Caco-2 (cell line): ENCODE measurements at regions of chr2 and their contacts with region 1.

Region 1: GRCh38 chr2:241355983-241356870 is at the start of gene FARP2:
- DNase-seq: peak; percentile 96 to 98
- H3K4me3 ChIP-seq: peak within 1 kb of the TSS; percentile 78
- H3K4me3 Mint-ChIP-seq: peak within 1 kb of the TSS; percentile 72
- H3K27ac Mint-ChIP-seq: peak within 1 kb of the TSS; percentile 76
- H3K4me1 ChIP-seq: peaks cover 25% of the 10 kb centered on the region
- H3K4me1 Mint-ChIP-seq: peaks cover 17% of the 10 kb centered on the region
- H3K27me3 ChIP-seq: no peaks in the 10 kb centered on the region
- H3K27me3 Mint-ChIP-seq: no peaks in the 10 kb centered on the region
- CTCF ChIP-seq: no peak
- total RNA-seq, gene FARP2: 37.2 and 37.3 TPM in 2 replicates

Region 2: GRCh38 chr2:241300000-241300399 is 56.2 kb before region 1 on chr2:
- CTCF ChIA-PET with region 1: no interaction called
- POLR2A ChIA-PET with region 1: no interaction called
- intact Hi-C with region 1: no loop called
- DNase-seq: no peak
- H3K4me3 ChIP-seq: no peak overlapping the region
- H3K4me3 Mint-ChIP-seq: no peak overlapping the region
- H3K27ac Mint-ChIP-seq: no peak overlapping the region
- H3K4me1 ChIP-seq: no peaks in the 10 kb centered on the region
- H3K4me1 Mint-ChIP-seq: peaks cover 20% of the 10 kb centered on the region
- H3K27me3 ChIP-seq: no peaks in the 10 kb centered on the region
- H3K27me3 Mint-ChIP-seq: no peaks in the 10 kb centered on the region
- CTCF ChIP-seq: no peak

Region 3: DNA sequence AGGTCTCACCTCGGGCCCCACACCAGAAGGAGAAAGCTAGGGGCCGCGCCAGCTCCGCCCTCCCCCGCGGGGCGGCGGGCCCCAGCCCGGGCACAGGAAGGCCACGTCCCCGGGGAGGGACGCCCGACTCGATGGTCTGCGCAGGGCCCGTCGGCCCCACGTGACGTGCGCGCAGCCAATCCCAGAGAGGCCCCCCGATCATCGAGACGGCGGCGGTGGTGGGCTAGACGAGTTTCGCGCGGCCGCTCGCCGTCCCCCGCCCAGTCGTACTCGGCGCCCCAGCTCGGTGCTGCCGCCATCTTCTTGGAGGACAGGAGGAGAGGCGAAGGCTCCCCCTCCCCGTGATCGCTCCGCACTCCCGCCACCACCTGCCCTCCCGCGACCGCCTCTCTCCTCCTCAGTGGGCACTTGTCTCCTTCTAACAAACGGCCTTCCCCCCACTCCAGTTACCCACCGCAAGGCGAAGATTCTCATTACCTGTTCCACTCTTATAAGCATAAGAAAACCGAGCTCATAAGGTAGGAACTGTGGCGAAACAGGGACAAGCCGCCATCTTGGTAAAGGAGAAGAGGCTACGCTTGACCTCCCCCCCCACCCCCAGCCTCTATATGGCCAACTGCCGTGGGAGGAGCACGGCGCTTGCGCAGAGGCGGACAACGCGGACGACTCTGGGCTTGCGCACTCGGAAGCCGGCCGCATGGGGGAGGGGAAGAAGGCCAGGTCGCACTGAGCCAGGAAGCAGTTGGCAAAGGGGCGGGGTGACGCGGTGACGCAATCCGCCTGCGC is 40.9 kb before region 1 on chr2 and contains the start of gene HDLBP:
- CTCF ChIA-PET with region 1: no interaction called
- POLR2A ChIA-PET with region 1: interaction called, 7 read pairs
- intact Hi-C with region 1: loop called (anchors 1 kb)
- DNase-seq: peak; percentile 97 to 98
- H3K4me3 ChIP-seq: peak within 1 kb of the TSS; percentile 92
- H3K4me3 Mint-ChIP-seq: peak within 1 kb of the TSS; percentile 100
- H3K27ac Mint-ChIP-seq: peak within 1 kb of the TSS; percentile 100
- H3K4me1 ChIP-seq: peaks cover 18% of the 10 kb centered on the region; the same call in 1 of the 2 replicates
- H3K4me1 Mint-ChIP-seq: peaks cover 17% of the 10 kb centered on the region
- H3K27me3 ChIP-seq: no peaks in the 10 kb centered on the region
- H3K27me3 Mint-ChIP-seq: no peaks in the 10 kb centered on the region
- CTCF ChIP-seq: no peak
- total RNA-seq, gene HDLBP: 350 and 379 TPM in 2 replicates

Region 4: DNA sequence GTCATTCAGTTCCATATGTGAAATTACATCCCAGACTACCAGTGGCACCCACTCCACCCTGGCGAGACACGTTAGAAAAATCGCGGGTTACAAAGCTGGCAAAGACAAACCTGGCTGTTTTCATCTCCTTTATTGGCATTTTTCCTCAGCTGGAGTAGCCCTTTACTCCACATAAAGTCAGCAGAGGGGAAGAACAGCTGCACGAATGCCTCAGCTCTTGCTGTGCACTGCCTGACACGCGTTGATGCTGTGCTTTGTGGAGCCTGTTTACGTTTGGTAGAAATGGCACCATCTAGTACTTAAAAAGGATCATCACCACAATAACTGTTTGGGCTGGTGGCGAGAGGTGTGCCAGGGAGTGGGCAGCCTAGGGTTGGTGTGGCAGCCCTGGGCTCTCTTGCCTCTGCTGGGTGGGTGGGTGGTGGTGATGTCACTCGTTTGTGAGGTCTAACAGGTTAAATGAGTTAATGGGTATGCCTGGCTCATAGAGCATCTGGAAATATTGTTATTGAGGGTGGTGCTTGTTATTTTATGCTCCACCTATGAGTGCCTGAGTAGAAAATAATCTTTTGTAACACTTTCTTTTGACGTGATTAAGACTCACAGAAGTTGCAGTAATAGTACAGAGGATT is 16.2 kb after region 1 on chr2:
- CTCF ChIA-PET with region 1: interaction called, 3 read pairs
- POLR2A ChIA-PET with region 1: interaction called, 13 read pairs
- intact Hi-C with region 1: loop called (anchors 1 kb)
- DNase-seq: no peak
- H3K4me3 ChIP-seq: no peak overlapping the region
- H3K4me3 Mint-ChIP-seq: no peak overlapping the region
- H3K27ac Mint-ChIP-seq: peak overlapping the region; percentile 26
- H3K4me1 ChIP-seq: peaks cover 37% of the 10 kb centered on the region
- H3K4me1 Mint-ChIP-seq: peaks cover 19% of the 10 kb centered on the region
- H3K27me3 ChIP-seq: no peaks in the 10 kb centered on the region
- H3K27me3 Mint-ChIP-seq: no peaks in the 10 kb centered on the region
- CTCF ChIP-seq: no peak

Region 5: DNA sequence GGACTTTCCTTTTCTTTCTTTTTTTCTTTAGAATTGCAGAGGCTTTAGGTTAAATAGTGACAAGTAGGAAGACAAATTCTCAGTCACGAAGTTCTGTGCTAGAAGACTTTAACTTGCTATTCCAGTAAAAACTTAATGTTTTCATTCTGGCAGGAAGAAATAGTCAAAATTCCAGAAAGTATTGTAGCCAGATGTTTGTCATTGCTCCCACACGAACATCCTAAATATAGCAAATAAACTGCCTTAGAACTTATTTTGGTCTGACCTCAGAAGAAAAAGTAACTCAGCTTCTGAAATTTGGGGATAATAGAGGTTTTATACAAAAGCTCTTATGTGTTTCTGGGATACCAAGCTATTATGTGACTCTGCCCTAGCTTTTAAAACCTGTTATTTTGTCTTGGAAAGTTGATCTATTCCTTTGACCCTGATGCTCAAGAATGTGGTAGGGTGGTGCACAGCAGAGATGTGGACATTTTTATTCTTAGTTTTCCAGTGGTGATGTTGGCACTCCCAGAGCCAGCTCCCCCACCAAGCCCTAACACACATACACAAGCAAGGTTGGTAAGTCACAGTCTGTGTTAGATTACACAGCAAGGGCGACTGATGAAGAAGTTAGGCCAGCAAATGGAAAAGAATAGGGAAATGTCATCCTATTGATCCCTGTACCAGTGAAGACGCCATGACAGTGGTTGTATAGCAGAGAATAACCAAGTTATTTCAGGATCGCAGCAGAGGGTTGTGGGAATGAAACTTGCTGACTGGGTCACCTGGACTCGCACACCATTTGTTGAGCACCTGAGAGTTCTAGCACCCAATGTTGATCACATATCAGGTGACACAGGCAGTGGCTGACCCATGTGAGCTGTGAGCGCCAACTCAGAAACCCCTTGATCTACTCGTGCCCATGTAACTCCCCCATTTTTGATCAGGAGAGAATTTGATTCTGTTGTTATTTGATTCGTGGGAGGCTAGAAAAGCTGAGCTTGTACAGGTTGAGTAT is 23.6 kb after region 1 on chr2:
- CTCF ChIA-PET with region 1: interaction called, 3 read pairs
- POLR2A ChIA-PET with region 1: no interaction called
- intact Hi-C with region 1: loop called (anchors 1 kb)
- DNase-seq: no peak
- H3K4me3 ChIP-seq: no peak overlapping the region
- H3K4me3 Mint-ChIP-seq: no peak overlapping the region
- H3K27ac Mint-ChIP-seq: no peak overlapping the region
- H3K4me1 ChIP-seq: peaks cover 19% of the 10 kb centered on the region; the same call in 1 of the 2 replicates
- H3K4me1 Mint-ChIP-seq: peaks cover 7% of the 10 kb centered on the region
- H3K27me3 ChIP-seq: no peaks in the 10 kb centered on the region
- H3K27me3 Mint-ChIP-seq: no peaks in the 10 kb centered on the region
- CTCF ChIP-seq: no peak

Region 6: DNA sequence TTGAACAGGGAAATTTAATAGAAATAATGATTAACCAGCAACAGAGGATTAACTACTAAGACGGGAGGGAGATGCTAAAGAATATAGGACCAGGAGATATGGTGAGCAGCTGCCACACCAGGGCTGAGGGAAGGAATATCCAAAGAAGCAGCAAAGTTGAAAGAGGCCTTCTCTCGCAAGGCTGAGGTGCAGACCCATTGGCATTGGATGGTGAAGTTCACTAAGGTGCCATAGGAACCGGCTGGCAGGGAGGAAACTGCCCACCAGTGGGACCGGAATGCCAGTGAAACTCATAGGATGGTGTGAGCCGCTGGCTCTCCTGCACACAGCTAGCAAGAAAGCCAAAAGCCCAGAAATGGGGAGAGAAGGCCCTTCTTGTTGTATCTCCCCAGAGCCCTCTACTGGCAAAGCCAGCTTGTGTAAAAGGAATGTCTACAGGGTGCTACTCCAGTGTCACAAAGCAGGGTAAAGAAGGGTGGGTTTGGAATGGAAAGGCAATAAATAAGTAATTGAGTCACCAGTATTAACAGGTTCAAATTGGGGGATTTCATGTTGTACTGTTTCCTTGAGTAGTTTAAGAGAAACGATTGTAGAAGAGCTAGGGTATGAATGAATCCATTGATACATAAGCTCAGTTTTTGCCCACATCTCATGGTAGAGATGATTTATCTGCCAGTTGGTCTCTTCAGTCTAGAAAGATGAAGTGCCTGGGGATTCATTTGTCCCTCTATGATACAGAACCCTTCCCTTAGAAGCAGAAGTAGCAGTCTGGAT is 35.9 kb after region 1 on chr2:
- CTCF ChIA-PET with region 1: interaction called, 14 read pairs
- POLR2A ChIA-PET with region 1: no interaction called
- intact Hi-C with region 1: loop called (anchors 1 kb)
- DNase-seq: peak; percentile 52 to 59
- H3K4me3 ChIP-seq: no peak overlapping the region
- H3K4me3 Mint-ChIP-seq: no peak overlapping the region
- H3K27ac Mint-ChIP-seq: peak overlapping the region; percentile 37
- H3K4me1 ChIP-seq: no peaks in the 10 kb centered on the region
- H3K4me1 Mint-ChIP-seq: peaks cover 11% of the 10 kb centered on the region
- H3K27me3 ChIP-seq: no peaks in the 10 kb centered on the region
- H3K27me3 Mint-ChIP-seq: no peaks in the 10 kb centered on the region
- CTCF ChIP-seq: peak; percentile 45 to 80

Region 7: GRCh38 chr2:241432824-241433448 is 76.7 kb after region 1 on chr2:
- CTCF ChIA-PET with region 1: no interaction called
- POLR2A ChIA-PET with region 1: no interaction called
- intact Hi-C with region 1: no loop called
- DNase-seq: peak in 1 of 2 experiments; percentile 4
- H3K4me3 ChIP-seq: no peak overlapping the region
- H3K4me3 Mint-ChIP-seq: no peak overlapping the region
- H3K27ac Mint-ChIP-seq: no peak overlapping the region
- H3K4me1 ChIP-seq: no peaks in the 10 kb centered on the region
- H3K4me1 Mint-ChIP-seq: peaks cover 7% of the 10 kb centered on the region
- H3K27me3 ChIP-seq: no peaks in the 10 kb centered on the region
- H3K27me3 Mint-ChIP-seq: no peaks in the 10 kb centered on the region
- CTCF ChIP-seq: no peak

Region 8: GRCh38 chr2:241482176-241482955 is 126.1 kb after region 1 on chr2:
- CTCF ChIA-PET with region 1: no interaction called
- POLR2A ChIA-PET with region 1: no interaction called
- intact Hi-C with region 1: no loop called
- DNase-seq: no peak
- H3K4me3 ChIP-seq: no peak overlapping the region
- H3K4me3 Mint-ChIP-seq: no peak overlapping the region
- H3K27ac Mint-ChIP-seq: no peak overlapping the region
- H3K4me1 ChIP-seq: no peaks in the 10 kb centered on the region
- H3K4me1 Mint-ChIP-seq: no peaks in the 10 kb centered on the region
- H3K27me3 ChIP-seq: no peaks in the 10 kb centered on the region
- H3K27me3 Mint-ChIP-seq: no peaks in the 10 kb centered on the region
- CTCF ChIP-seq: no peak